HepG2 (cell line): ENCODE measurements at regions of chr14 and their contacts with region 1.

Region 1: DNA sequence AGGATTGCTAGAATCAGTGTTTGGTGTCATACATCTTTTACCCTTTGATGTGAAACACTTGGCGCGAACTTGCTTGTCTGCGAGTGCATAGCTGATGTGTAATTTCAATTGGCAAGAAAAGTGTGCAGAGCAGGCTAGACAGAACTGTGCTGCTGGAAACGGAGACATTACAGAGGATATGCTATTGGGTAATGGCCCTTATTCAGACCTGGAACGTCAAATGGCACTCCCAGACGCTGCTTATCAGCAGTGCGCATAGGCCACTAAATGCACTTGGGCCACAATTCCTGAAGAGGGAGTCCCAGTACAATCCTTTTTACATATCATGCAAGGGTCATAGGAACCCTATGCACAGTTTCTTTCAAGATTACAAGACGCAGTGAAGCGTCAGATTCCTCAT is 15.7 kb upstream of the SLC10A1 start:
- DNase-seq: peak; percentile 43
- ATAC-seq: no peak
- H3K4me3 ChIP-seq: no peak overlapping the region
- H3K27ac ChIP-seq: no peak overlapping the region
- H3K4me1 ChIP-seq: peaks cover 60% of the 10 kb centered on the region
- H3K27me3 ChIP-seq: no peaks in the 10 kb centered on the region
- CTCF ChIP-seq: peak; percentile 68
- EP300 ChIP-seq: no peak
- POLR2A ChIP-seq: no peak
- RAD21 ChIP-seq: peak; percentile 47; the same call in 1 of the 2 replicates

Region 2: GRCh38 chr14:69772082-69773017 is 40.4 kb before region 1 on chr14:
- CTCF ChIA-PET with region 1: no interaction called
- POLR2A ChIA-PET with region 1: interaction called, 47 read pairs
- in situ Hi-C with region 1: no loop called
- intact Hi-C with region 1: no loop called
- DNase-seq: peak; percentile 45
- ATAC-seq: peak; percentile 34
- H3K4me3 ChIP-seq: no peak overlapping the region
- H3K27ac ChIP-seq: peak overlapping the region; percentile 56
- H3K4me1 ChIP-seq: peaks cover 61% of the 10 kb centered on the region
- H3K27me3 ChIP-seq: no peaks in the 10 kb centered on the region; a peak in 1 of 5 replicates
- CTCF ChIP-seq: no peak
- EP300 ChIP-seq: no peak
- POLR2A ChIP-seq: peak; percentile 10 to 41; a peak in 2 of 4 replicates
- RAD21 ChIP-seq: no peak

Region 3: DNA sequence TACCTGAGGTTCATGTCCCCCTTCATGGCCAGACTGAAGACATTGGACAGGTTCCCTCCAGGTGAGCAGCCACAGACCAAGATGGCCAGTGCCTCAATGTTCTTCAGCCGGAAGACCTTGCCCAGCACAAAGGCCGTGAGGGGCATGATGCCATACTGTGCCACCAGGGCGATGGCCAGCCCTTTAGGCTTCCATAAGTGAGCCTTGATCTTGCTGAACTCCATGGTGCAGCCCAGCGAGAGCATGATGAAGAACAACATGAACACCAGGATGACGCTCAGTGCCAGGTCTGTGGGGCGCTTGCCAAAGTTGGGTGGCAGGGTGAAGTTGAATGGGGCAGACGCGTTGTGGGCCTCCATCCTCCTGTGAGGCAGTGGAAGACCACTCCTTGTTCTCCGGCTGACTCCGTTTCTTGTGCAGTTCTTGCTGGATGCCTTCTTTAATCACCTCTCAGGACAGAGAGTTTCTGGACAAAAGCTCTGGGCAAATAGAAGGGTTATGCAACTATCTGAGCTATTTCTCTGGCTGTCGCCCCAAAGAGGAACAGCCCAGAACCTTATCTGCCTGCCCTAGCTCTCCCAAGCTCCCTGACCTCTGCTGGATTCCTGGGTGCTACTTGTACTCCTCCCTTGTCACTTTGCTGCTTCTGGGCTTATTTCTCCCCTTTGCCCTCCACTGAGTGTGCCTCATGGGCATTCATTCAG is 15.8 kb before region 1 on chr14 and contains the start of gene SLC10A1:
- CTCF ChIA-PET with region 1: no interaction called
- POLR2A ChIA-PET with region 1: interaction called, 18 read pairs
- in situ Hi-C with region 1: no loop called
- intact Hi-C with region 1: no loop called
- DNase-seq: peak; percentile 23
- ATAC-seq: peak; percentile 43
- H3K4me3 ChIP-seq: 0 out of 6 replicates have a peak within 1 kb of the TSS, but pooled peaks of 1 of the 3 experiments have one; percentile 9
- H3K27ac ChIP-seq: peak within 1 kb of the TSS; percentile 25
- H3K4me1 ChIP-seq: peaks cover 68% of the 10 kb centered on the region
- H3K27me3 ChIP-seq: no peaks in the 10 kb centered on the region
- CTCF ChIP-seq: no peak
- EP300 ChIP-seq: no peak
- POLR2A ChIP-seq: no peak
- RAD21 ChIP-seq: no peak
- total RNA-seq, gene SLC10A1: not detected in 2 replicates